ENCODE measurements at regions of chr12 and their contacts with region 1.

Region 1: DNA sequence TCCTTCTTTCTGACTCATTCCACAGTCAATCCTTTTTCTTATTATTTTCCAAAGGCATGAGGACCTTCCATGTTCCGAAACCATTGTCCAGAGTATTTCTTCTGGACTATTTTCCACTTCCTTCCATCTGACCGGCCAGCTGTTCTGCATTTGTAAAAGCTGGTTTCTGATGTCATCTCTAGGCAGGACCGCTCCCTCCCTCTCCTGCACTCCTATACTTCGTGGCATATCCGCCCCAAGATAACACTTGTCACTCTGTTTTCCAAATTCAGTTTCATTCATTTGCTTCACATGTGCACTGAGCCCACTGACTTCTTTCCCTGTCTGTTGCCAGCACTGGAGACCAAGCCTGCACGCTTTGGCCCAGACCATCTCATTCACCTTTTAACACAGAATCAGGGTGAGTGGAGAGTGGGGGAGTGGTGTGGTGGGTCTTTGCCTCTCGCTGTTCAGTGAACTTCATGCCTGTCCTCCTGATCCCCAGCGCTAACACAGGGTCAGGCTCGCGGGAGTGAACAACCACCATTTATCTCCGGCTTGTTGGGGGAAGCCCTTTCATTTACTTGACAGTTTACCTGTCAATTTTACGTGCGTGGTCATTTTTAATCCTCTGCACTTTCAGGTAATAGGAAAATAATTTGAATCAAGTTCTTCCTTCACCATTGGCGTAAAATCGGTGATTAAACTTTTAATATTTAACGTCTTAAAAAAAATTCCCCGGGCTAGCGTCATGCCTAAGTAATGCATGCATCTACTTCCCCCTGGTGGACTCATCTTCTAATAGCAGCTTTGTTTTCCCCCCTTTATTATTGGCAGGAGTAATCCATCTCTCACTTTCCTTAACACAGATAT is 52.5 kb downstream of the C12orf75 start:
- DNase-seq: no peak
- H3K4me3 ChIP-seq: peak overlapping the region in 2 of 4 donors; percentile 3 to 6
- H3K27ac ChIP-seq: no peak overlapping the region
- H3K4me1 ChIP-seq: peaks cover 0 to 9% (median 5%) of the 10 kb centered on the region in 4 donors
- H3K27me3 ChIP-seq: no peaks in the 10 kb centered on the region
- CTCF ChIP-seq: peak; percentile 73 to 87 (median 84)
- EP300 ChIP-seq: no peak
- POLR2A ChIP-seq: no peak

Region 2: GRCh38 chr12:105192624-105193225 is 190.3 kb before region 1 on chr12:
- in situ Hi-C with region 1: loop called in 1 of 4 experiments (anchors 10 kb)
- intact Hi-C with region 1: no loop called
- DNase-seq: no peak
- H3K4me3 ChIP-seq: no peak overlapping the region
- H3K27ac ChIP-seq: no peak overlapping the region
- H3K4me1 ChIP-seq: no peaks in the 10 kb centered on the region
- H3K27me3 ChIP-seq: no peaks in the 10 kb centered on the region
- CTCF ChIP-seq: no peak
- EP300 ChIP-seq: no peak
- POLR2A ChIP-seq: no peak

Region 3: GRCh38 chr12:105279460-105280056 is 103.4 kb before region 1 on chr12:
- in situ Hi-C with region 1: loop called in 2 of 4 experiments (anchors 10 kb)
- intact Hi-C with region 1: no loop called
- DNase-seq: peak; percentile 25
- H3K4me3 ChIP-seq: no peak overlapping the region
- H3K27ac ChIP-seq: no peak overlapping the region
- H3K4me1 ChIP-seq: peaks cover 0 to 14% (median 6%) of the 10 kb centered on the region in 4 donors
- H3K27me3 ChIP-seq: no peaks in the 10 kb centered on the region
- CTCF ChIP-seq: peak; percentile 48 to 68 (median 57)
- EP300 ChIP-seq: no peak
- POLR2A ChIP-seq: no peak